Sciatic nerve (tissue), 2 donors: ENCODE measurements at regions of chr11 and their contacts with region 1.

Region 1: DNA sequence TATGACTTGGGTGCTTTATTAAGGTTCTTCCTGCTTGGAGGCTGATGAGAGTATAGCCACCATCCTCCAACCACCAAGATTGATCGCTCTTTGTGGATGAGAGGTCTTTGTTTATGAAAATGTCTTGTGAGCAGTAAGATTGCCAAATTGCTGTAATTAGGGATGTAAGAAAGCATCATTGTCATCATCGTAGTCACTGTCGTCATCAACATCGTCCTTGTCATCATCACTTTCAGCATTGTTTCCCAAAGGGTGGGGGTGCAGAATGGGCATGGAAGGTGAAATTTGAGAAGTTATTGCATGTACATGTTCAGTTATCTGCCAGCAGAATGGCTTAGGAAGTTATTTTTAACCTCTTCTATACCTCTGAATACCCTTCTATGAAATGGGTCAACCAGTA is 439.4 kb upstream of the TENM4 start:
- DNase-seq: no peak
- ATAC-seq: no peak

Region 2: DNA sequence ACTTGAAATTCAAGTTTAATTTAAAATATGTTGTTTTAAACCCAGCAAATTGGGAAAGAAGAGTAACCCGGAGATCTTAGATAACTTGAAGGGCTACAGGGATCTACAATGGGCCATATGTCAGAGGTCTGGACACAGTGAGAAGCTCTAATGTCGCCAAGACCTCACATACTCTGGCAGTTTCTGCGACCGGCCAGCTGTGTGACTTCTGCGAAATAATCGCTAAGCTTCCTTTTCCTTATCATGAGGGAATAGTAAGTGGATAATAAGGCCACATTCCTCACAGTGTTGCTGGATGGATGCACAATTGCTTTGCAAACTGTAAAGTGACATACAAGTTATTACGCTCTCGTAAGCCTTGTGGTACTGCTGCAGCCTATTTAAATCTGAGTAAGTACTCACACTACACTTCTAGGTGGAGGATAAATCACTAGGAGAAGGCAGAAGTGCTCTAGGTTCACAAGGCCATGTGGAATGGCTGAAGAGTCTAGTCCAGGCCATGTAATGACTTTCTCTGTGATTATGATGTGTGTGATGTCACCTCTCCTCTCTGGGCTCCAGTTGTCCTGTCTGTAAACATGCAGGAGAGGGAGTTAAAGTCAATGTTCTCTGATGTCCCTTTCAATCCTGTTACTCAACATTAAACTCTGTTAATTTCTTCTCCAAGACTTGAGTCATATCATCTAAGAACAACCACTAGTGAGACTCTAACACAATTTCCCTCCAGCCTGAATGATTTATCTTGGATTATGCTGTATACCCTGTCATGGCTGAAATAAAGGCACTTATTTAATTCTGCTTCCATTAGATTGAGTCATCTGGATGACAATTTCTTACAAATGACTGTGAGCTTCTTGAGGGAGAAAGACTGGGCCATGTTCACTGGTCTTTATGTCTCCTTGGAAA is 1113.0 kb before region 1 on chr11:
- intact Hi-C with region 1: loop called (anchors 10 kb)
- DNase-seq: no peak
- ATAC-seq: no peak

Region 3: DNA sequence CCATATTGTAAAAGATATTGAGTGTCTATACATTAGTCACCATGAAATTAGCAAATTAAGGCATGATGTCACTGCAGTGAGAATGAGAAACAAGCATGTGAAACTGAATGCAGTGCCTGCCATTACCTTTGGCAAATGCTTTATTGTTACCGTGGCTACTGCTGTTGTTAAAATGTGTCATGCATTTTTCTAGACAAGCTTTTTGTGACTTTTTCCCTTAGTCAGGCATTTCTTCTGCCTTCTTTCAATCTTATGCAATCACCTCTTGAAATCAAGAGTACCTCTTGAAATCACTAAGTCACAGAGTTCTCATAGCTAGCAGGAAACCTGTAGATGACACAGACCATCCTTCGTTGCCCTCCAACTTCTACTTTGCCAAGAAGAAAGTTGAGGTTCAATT is 22.2 kb after region 1 on chr11:
- intact Hi-C with region 1: loop called (anchors 1 kb)
- DNase-seq: no peak
- ATAC-seq: no peak